GM23248 (cell line): ENCODE measurements at regions of chr2 and their contacts with region 1.

Region 1: DNA sequence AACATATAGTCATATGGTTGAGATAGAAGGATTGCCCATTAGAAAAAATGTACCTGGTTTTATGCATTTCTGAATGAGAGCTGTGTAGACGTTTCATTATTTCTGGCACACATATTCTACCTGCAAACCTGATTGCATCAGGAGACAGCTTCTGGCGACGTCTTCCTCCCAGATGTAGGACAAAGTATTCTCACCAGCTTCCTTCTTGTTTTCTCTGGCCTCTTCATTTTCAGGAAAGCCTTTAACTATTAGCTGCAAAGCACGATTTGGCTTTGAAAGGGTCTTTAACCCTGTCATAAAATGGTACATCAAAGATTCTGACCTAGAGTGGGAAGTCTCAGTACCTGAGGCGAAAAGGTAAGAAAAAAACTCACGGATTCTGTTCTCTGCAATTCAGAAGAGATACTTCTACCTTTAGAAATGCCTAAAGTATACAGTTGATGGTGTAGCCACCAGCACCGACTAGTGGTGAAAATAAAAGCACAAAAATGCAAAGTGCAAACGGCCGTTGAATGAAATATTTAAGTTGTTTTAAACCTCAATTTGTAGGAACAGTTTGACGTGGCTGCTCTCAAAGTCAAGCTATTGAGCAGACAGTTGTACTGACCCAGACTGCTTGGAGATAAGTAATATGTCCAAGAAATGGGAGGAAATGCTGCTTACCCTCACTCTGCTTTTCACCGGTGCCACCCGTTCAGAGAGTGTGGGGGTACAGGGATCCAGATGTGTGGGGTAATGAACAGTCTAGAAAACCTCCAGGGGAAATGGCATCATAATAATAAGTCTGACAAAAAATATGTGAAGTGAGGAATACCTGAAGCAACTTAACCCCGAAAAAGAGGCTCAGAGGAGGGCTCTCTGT is 20.2 kb downstream of the IL18RAP start:
- DNase-seq: peak; percentile 63
- H3K4me3 ChIP-seq: no peak overlapping the region
- H3K27ac ChIP-seq: no peak overlapping the region
- H3K4me1 ChIP-seq: no peaks in the 10 kb centered on the region
- H3K27me3 ChIP-seq: no peaks in the 10 kb centered on the region

Region 2: DNA sequence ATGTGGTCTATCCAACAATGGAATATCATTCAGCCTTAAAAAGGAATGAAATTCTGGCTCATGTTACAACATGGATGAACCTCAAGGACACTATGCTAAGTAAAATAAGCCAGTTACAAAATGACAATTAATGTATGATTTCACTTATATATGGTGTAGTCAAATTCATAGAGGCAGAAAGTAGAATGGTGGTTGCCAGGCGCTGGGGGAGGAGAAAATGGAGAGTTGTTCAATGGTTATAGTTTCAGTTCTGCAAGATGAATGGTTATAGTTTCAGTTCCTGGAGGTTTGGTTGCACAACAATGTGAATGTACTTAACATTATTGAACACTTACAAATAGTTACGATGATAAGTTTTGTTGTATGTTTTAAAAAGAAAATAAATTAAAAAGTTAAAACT is 530.7 kb before region 1 on chr2:
- in situ Hi-C with region 1: loop called (anchors 25 kb)
- DNase-seq: no peak
- H3K4me3 ChIP-seq: no peak overlapping the region
- H3K27ac ChIP-seq: no peak overlapping the region
- H3K4me1 ChIP-seq: no peaks in the 10 kb centered on the region
- H3K27me3 ChIP-seq: no peaks in the 10 kb centered on the region

Region 3: GRCh38 chr2:102020596-102021181 is 422.5 kb before region 1 on chr2:
- in situ Hi-C with region 1: loop called (anchors 25 kb)
- DNase-seq: peak; percentile 89
- H3K4me3 ChIP-seq: no peak overlapping the region
- H3K27ac ChIP-seq: no peak overlapping the region
- H3K4me1 ChIP-seq: peaks cover 40% of the 10 kb centered on the region
- H3K27me3 ChIP-seq: no peaks in the 10 kb centered on the region

Region 4: DNA sequence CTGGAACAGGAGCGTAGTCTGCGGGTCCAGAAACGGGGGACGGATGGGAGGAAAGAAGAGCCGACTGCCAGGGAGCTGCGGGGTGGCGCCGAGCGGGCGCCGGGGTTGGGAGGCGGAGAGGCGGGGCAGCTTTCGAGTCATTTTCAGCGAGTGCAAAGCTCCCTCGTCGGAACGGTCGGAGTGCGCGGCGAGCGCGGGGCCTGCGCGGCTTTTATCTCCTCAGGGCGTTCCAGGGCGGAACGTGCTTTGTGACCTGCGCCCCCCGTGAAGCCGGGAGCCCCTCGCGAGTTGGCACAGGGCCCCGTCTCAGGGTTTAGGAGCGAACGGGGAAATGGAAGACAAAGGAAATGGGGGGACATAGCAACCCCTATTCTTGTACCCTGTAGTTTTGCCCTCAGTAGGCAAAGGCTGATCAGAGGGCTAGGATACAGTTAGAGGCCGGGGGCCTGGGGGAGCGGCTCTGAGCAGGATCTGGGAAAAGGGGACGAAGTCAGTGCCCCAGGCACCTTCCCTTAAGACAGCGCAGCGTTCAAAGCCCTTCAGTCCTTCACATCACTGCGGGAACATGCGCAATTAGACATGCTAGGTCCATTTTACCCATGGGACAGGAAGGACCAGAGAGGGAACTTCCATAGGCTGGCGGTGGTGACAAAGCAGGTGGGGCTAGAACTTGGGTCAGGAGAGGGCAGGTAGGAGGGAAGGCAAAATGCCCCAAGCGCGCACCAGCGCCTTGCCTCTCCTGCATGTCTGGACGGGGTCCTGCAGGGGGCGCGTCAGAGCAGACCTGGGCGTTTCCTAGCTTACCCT is 192.0 kb before region 1 on chr2:
- in situ Hi-C with region 1: loop called (anchors 10 kb)
- DNase-seq: peak; percentile 84
- H3K4me3 ChIP-seq: peak overlapping the region; percentile 73
- H3K27ac ChIP-seq: no peak overlapping the region
- H3K4me1 ChIP-seq: peaks cover 1% of the 10 kb centered on the region
- H3K27me3 ChIP-seq: no peaks in the 10 kb centered on the region

Region 5: DNA sequence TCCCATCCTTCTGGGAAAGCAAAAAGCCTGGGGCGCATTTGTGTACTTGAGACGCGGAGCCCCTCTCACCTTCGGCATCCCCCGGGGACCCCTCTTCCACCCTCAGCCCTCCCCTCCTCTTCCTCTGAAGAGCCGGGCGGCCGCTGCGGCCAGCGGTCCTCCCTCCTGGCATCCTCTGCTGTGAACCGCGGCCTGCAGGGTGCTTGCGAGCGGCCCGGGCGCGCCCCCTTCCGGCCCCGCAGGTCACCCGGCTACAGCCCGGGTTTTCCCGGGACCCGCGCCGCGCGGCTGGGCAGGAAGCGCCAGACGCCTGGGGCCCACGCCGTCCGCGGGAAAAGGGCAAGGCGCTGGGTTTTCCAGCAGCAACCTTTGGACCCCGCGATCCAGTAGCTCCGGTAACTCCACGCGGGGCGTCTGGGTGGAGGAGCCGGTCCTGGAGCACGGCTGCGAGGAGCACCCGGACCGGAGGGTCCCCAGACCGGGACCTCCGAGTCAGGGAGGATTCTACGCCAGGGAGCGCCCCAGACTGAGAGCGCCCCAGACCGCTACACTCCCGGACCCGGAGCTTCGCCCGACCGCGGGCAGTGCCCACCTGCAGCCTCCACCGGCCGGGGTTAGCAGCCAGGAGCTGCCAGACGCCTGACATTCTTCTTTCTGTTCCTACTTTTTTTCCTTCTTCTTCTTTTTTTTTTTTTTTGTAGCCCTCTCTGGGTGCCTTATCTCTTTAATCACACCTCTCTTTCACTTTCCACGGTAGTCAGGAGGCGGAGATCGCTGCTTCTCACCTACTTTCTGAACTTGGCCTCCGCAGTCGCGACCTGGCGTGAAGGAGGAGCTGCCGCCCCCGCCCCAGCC is 87.4 kb before region 1 on chr2 and contains the start of gene IL18R1:
- in situ Hi-C with region 1: no loop called
- DNase-seq: peak; percentile 92
- H3K4me3 ChIP-seq: peak within 1 kb of the TSS; percentile 91
- H3K27ac ChIP-seq: no peak within 1 kb of the TSS
- H3K4me1 ChIP-seq: no peaks in the 10 kb centered on the region
- H3K27me3 ChIP-seq: 0 out of 2 replicates have a peak, but pooled peaks cover 4% of the 10 kb centered on the region
- total RNA-seq, gene IL18R1: 1.5 and 1.6 TPM in 2 replicates